Ovary (tissue), 10 donors: ENCODE measurements at regions of chr7 and their contacts with region 1.

Region 1: GRCh38 chr7:82234457-82235049 is 209.0 kb downstream of the CACNA2D1 start:
- DNase-seq: no peak
- H3K4me3 ChIP-seq: no peak overlapping the region
- H3K27ac ChIP-seq: no peak overlapping the region
- H3K4me1 ChIP-seq: no peaks in the 10 kb centered on the region
- H3K27me3 ChIP-seq: no peaks in the 10 kb centered on the region
- CTCF ChIP-seq: peak; percentile 24 to 44 (median 41)
- EP300 ChIP-seq: no peak
- POLR2A ChIP-seq: no peak

Region 2: GRCh38 chr7:80900583-80901576 is 1333.7 kb before region 1 on chr7:
- intact Hi-C with region 1: no loop called
- DNase-seq: peak in 1 of 5 donors; percentile 39
- H3K4me3 ChIP-seq: no peak overlapping the region
- H3K27ac ChIP-seq: peak overlapping the region in 1 of 2 donors; percentile 2
- H3K4me1 ChIP-seq: no peaks in the 10 kb centered on the region
- H3K27me3 ChIP-seq: no peaks in the 10 kb centered on the region
- CTCF ChIP-seq: no peak
- EP300 ChIP-seq: no peak
- POLR2A ChIP-seq: no peak

Region 3: GRCh38 chr7:82481499-82482097 is 247.0 kb after region 1 on chr7:
- intact Hi-C with region 1: loop called in 1 of 4 experiments (anchors 5 kb)
- DNase-seq: no peak
- H3K4me3 ChIP-seq: no peak overlapping the region
- H3K27ac ChIP-seq: no peak overlapping the region
- H3K4me1 ChIP-seq: no peaks in the 10 kb centered on the region
- H3K27me3 ChIP-seq: no peaks in the 10 kb centered on the region
- CTCF ChIP-seq: peak; percentile 36 to 57 (median 43)
- EP300 ChIP-seq: no peak
- POLR2A ChIP-seq: no peak

Region 4: DNA sequence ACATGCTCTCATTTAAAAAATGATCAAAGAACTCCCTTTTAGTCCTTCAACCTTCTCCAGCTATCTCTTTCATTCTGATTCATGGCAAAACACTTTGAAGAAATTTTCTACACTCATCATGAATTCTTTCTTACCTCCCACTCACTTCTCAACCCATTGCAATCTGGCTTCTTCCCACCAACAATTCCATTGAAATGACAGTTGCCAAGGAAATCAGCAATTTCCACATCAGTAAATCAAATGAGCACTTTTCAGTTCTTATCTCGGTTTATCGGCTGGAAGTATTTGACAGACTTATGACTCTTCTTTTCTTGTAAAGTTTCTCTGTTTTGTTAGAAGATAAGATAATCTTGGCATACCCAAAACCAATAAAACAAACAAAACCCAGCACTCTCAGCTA is 308.1 kb after region 1 on chr7:
- intact Hi-C with region 1: no loop called
- DNase-seq: no peak
- H3K4me3 ChIP-seq: no peak overlapping the region
- H3K27ac ChIP-seq: no peak overlapping the region
- H3K4me1 ChIP-seq: no peaks in the 10 kb centered on the region
- H3K27me3 ChIP-seq: no peaks in the 10 kb centered on the region
- CTCF ChIP-seq: no peak
- EP300 ChIP-seq: no peak
- POLR2A ChIP-seq: no peak